ENCODE measurements at regions of chr17 and their contacts with region 1.

Region 1: GRCh38 chr17:72592242-72592966 is 471.6 kb downstream of the SOX9 start:
- DNase-seq: peak; percentile 67
- H3K4me3 ChIP-seq: peak overlapping the region; percentile 96
- H3K27ac ChIP-seq: peak overlapping the region; percentile 21
- H3K27me3 ChIP-seq: no peaks in the 10 kb centered on the region
- CTCF ChIP-seq: no peak

Region 2: DNA sequence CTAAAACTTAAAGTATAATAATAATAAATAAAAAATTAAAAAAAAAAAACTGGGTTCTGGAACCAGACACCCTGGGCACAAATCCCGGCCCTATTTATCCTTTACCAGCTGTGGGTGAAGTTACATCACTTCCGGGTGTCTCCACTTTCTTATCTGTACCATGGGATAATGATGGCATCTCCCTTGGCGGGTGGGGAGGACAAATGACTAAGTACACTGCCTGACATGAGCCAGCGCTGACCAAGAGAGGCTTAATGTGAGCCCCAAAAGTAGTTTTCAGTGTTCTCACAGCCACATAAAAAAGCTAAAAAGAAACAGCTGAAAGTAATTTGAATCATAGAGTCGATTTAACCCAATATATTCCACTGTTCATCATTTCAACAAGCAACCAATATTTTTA is 46.6 kb before region 1 on chr17:
- CTCF ChIA-PET with region 1: no interaction called
- POLR2A ChIA-PET with region 1: no interaction called
- DNase-seq: no peak
- H3K4me3 ChIP-seq: no peak overlapping the region
- H3K27ac ChIP-seq: no peak overlapping the region
- H3K27me3 ChIP-seq: no peaks in the 10 kb centered on the region
- CTCF ChIP-seq: no peak

Region 3: DNA sequence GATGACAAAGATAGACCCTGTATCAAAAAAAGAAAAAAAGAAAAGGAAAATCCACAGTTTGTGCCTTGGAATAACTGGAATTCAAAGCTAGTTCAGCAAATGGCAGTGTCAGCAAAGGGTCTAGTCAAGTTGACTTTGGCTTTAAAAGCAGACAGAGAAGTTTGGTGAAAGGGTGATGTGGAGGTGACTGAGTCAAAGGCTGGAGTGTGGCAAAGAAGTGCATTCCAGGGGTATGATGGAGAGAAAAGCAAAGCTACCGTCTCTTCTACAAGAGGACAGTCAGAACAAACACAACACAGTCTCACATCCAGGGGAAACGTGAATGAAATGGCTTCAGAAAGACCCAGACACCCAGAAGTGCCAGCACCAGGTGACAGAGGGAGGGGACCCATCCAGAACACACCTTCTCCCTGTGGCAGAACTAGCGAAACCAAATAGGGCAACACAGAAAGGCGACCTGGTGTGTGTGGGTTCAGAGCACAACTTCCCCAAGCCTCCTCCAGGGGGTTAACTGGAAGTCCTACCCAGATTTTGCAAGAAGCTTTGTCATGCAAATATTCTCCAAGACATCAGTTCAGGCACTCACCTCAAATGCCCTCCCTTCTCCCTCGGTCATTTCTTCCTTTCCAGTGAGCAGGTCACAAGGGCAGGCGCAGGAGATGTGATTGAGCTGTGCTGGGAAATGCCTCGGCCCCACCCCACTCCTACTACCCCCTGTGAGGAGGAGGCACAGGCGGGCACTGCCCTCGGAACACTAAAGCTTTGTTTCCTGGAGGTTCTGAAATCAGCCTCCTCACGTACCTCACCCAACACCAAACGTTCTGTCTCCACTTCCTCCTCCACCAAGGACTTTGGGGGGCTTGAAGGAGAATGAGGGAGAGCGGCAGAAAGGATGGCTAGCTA is 10.4 kb after region 1 on chr17:
- CTCF ChIA-PET with region 1: interaction called, 4 read pairs
- POLR2A ChIA-PET with region 1: interaction called, 49 read pairs
- DNase-seq: no peak
- H3K4me3 ChIP-seq: no peak overlapping the region
- H3K27ac ChIP-seq: peak overlapping the region; percentile 62
- H3K27me3 ChIP-seq: no peaks in the 10 kb centered on the region
- CTCF ChIP-seq: peak; percentile 50

Region 4: GRCh38 chr17:72691586-72691985 is 99.2 kb after region 1 on chr17:
- CTCF ChIA-PET with region 1: no interaction called
- POLR2A ChIA-PET with region 1: interaction called, 10 read pairs
- DNase-seq: peak; percentile 78
- H3K4me3 ChIP-seq: no peak overlapping the region
- H3K27ac ChIP-seq: peak overlapping the region; percentile 82
- H3K27me3 ChIP-seq: no peaks in the 10 kb centered on the region
- CTCF ChIP-seq: no peak

Region 5: DNA sequence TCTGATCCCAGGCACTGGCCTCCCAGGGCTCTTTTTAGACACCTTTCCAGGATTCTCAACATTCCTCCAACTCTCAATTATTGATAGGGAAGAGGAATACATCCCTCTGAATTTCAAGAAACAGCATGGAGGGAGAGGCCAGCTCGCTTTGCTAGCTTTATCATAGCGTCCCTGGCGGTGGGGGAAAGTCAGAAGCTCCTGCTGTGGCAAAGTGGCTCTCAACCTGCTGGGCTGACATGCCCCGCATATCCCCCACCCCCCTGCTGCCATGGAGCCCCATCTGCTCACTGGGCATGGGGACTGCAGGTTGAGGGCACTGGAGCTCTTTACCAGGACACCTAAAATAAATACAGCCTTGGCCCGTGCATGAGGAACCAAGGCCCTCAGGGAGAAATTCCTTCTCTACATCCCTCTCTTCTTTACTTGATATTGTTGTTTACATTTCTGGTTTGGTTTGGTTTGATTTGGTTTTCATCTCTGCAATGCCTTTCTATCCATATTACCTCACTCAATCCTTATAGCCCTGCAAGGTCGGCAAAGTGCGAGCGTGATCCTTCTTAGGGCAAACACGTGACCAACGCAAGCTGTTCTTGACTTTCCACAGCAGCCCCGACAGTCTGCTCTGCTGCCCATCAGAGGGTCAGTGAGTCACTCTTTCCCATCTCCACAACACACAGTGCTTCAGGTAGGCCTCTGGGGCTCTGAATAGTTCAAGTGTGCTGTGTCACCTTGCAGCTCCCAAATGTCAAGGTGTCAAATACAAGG is 360.0 kb after region 1 on chr17:
- CTCF ChIA-PET with region 1: no interaction called
- POLR2A ChIA-PET with region 1: no interaction called
- DNase-seq: no peak
- H3K4me3 ChIP-seq: no peak overlapping the region
- H3K27ac ChIP-seq: no peak overlapping the region
- H3K27me3 ChIP-seq: no peaks in the 10 kb centered on the region
- CTCF ChIP-seq: no peak

Measured in AG04450 (cell line).